ENCODE measurements at regions of chr2 and their contacts with region 1.

Region 1: GRCh38 chr2:188984680-188985079 is 10.5 kb downstream of the COL3A1 start:
- DNase-seq: no peak
- H3K4me3 ChIP-seq: no peak overlapping the region
- H3K27ac ChIP-seq: peak overlapping the region; percentile 91
- H3K4me1 ChIP-seq: peaks cover 27% of the 10 kb centered on the region
- H3K27me3 ChIP-seq: no peaks in the 10 kb centered on the region
- CTCF ChIP-seq: no peak
- POLR2A ChIP-seq: no peak

Region 2: GRCh38 chr2:188524519-188525113 is 460.1 kb before region 1 on chr2:
- intact Hi-C with region 1: loop called (anchors 5 kb)
- DNase-seq: no peak
- H3K4me3 ChIP-seq: no peak overlapping the region
- H3K27ac ChIP-seq: peak overlapping the region; percentile 63
- H3K4me1 ChIP-seq: peaks cover 5% of the 10 kb centered on the region
- H3K27me3 ChIP-seq: no peaks in the 10 kb centered on the region
- CTCF ChIP-seq: peak; percentile 28 to 74 (median 50)
- POLR2A ChIP-seq: no peak

Region 3: GRCh38 chr2:189363559-189363958 is 378.9 kb after region 1 on chr2:
- intact Hi-C with region 1: no loop called
- DNase-seq: no peak
- H3K4me3 ChIP-seq: no peak overlapping the region
- H3K27ac ChIP-seq: no peak overlapping the region
- H3K4me1 ChIP-seq: no peaks in the 10 kb centered on the region
- H3K27me3 ChIP-seq: no peaks in the 10 kb centered on the region
- CTCF ChIP-seq: no peak
- POLR2A ChIP-seq: no peak